ENCODE measurements at regions of chr9 and their contacts with region 1.

Region 1: GRCh38 chr9:92790542-92791527 is 26.2 kb upstream of the BICD2 start:
- DNase-seq: peak; percentile 79 to 83
- H3K4me3 ChIP-seq: no peak overlapping the region
- H3K27ac ChIP-seq: no peak overlapping the region
- H3K4me1 ChIP-seq: no peaks in the 10 kb centered on the region
- H3K27me3 ChIP-seq: no peaks in the 10 kb centered on the region
- CTCF ChIP-seq: peak; percentile 44 to 95 (median 80)
- POLR2A ChIP-seq: no peak

Region 2: GRCh38 chr9:92325269-92325990 is 465.4 kb before region 1 on chr9 and contains the starts of genes CENPP and NOL8:
- intact Hi-C with region 1: loop called (anchors 5 kb)
- DNase-seq: peak; percentile 83 to 87
- H3K4me3 ChIP-seq: peak within 1 kb of the TSS; percentile 50 to 60 (median 50)
- H3K27ac ChIP-seq: peak within 1 kb of the TSS; percentile 96 to 100 (median 98)
- H3K4me1 ChIP-seq: peaks cover 15 to 16% of the 10 kb centered on the region in 2 donors
- H3K27me3 ChIP-seq: no peaks in the 10 kb centered on the region
- CTCF ChIP-seq: peak in 1 of 6 experiments; percentile 20
- POLR2A ChIP-seq: peak in 1 of 2 donors; percentile 35
- total RNA-seq, gene CENPP: 1.5 to 11.6 (median 5.5) TPM
- total RNA-seq, gene NOL8: 30.0 to 38.2 (median 33.6) TPM

Region 3: GRCh38 chr9:92716557-92716956 is 74.3 kb before region 1 on chr9:
- intact Hi-C with region 1: loop called (anchors 2 kb)
- DNase-seq: peak; percentile 64 to 74
- H3K4me3 ChIP-seq: no peak overlapping the region
- H3K27ac ChIP-seq: no peak overlapping the region
- H3K4me1 ChIP-seq: no peaks in the 10 kb centered on the region
- H3K27me3 ChIP-seq: no peaks in the 10 kb centered on the region
- CTCF ChIP-seq: peak; percentile 84 to 90 (median 86)
- POLR2A ChIP-seq: no peak

Region 4: DNA sequence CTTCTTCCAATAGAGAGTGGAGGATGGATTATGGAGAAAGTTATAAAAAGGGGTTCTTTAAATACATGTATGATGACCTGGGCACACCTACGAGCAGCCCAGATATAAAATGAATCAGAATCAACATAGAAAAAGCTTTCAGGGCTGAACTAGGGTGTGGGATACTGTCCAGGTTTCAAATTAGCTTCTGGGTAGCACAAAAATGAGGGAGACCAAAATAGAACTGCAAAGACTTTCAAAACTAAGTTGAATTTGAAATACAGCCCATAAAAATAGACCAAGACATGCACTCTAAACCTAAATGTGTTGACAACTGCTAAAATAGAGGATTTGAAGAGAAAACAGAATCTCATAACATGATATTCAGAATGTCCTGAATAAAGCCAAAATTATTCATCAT is 70.0 kb after region 1 on chr9:
- intact Hi-C with region 1: no loop called
- DNase-seq: no peak
- H3K4me3 ChIP-seq: no peak overlapping the region
- H3K27ac ChIP-seq: no peak overlapping the region
- H3K4me1 ChIP-seq: no peaks in the 10 kb centered on the region
- H3K27me3 ChIP-seq: no peaks in the 10 kb centered on the region
- CTCF ChIP-seq: no peak
- POLR2A ChIP-seq: no peak

Region 5: GRCh38 chr9:93154315-93154903 is 363.6 kb after region 1 on chr9:
- intact Hi-C with region 1: no loop called
- DNase-seq: peak in 1 of 2 donors; percentile 30
- H3K4me3 ChIP-seq: no peak overlapping the region
- H3K27ac ChIP-seq: no peak overlapping the region
- H3K4me1 ChIP-seq: peaks cover 4 to 6% of the 10 kb centered on the region in 2 donors
- H3K27me3 ChIP-seq: no peaks in the 10 kb centered on the region
- CTCF ChIP-seq: peak in 3 of 6 experiments; percentile 23 to 43 (median 33)
- POLR2A ChIP-seq: no peak